Activated T-helper 1 cell treated with anti-CD3 and anti-CD28 coated beads, Interleukin-12 subunit alpha, Interleukin-12 subunit beta, Interleukin-2, Interleukin-4 antibody, amounts not matched to agents 30 ng/mL and 10 ng/mL and 1 ng/mL, durations not matched to agents 14 hours and 24 hours and 36 hours (primary cell): ENCODE measurements at regions of chr6 and their contacts with region 1.

Region 1: GRCh38 chr6:135114355-135115145 is 59.9 kb upstream of the HBS1L start:
- DNase-seq: peak; percentile 53
- H3K4me3 Mint-ChIP-seq: peak overlapping the region; percentile 66
- H3K27ac Mint-ChIP-seq: peak overlapping the region; percentile 97
- H3K4me1 Mint-ChIP-seq: peaks cover 88% of the 10 kb centered on the region
- H3K27me3 Mint-ChIP-seq: no peaks in the 10 kb centered on the region

Region 2: GRCh38 chr6:135014353-135014832 is 100.2 kb before region 1 on chr6:
- intact Hi-C with region 1: loop called (anchors 1 kb)
- DNase-seq: no peak
- H3K4me3 Mint-ChIP-seq: peak overlapping the region; percentile 54
- H3K27ac Mint-ChIP-seq: peak overlapping the region; percentile 92
- H3K4me1 Mint-ChIP-seq: peaks cover 57% of the 10 kb centered on the region
- H3K27me3 Mint-ChIP-seq: no peaks in the 10 kb centered on the region

Region 3: DNA sequence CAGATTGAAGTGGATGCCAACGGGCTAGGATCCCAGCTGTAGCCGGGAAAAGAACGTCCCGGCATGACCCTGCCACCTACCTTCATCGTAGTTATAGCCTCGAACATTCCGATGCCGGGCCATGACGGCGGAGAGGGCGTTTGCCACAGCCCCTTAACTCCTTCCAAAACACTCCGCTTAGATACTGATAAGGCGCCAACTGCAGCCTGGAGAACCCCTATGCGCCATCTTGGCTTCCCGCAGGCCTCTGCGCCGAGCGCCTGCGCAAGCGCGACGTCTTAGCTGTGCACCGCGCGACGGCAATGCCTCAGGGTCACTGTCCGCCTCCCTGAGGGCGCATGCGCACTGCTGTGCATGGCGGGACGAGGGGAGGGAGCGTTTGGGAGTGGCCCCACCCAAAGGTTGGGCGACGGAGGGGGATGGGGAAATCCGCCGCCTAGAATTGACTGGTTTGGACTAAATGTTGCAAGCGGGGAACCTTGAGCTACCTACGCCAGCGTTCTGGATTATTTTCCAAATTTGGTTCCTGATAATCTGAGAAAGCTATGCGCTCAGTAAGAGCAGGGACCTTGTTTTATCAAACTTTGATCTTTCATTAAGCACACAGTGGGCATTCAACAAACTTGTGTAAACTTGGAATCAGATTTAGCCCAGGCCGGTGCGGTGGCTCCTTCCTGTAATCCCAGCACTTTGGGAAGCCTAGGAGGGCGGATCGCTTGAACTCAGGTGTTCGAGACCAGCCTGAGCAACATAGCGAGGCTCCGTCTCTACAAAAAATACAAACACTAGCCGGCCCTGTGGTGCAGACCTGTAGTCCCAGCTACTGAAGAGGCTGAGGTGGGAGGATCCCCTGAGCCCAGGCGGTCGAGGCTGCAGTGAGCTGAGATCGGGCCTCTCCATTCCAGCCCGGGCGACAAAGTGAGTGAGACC is 59.7 kb before region 1 on chr6 and contains the start of gene HBS1L:
- intact Hi-C with region 1: loop called (anchors 1 kb)
- DNase-seq: peak; percentile 99
- H3K4me3 Mint-ChIP-seq: peak within 1 kb of the TSS; percentile 94
- H3K27ac Mint-ChIP-seq: peak within 1 kb of the TSS; percentile 96
- H3K4me1 Mint-ChIP-seq: peaks cover 42% of the 10 kb centered on the region
- H3K27me3 Mint-ChIP-seq: peaks cover 2% of the 10 kb centered on the region
- total RNA-seq, gene HBS1L: 104 and 115 TPM in 2 replicates

Region 4: DNA sequence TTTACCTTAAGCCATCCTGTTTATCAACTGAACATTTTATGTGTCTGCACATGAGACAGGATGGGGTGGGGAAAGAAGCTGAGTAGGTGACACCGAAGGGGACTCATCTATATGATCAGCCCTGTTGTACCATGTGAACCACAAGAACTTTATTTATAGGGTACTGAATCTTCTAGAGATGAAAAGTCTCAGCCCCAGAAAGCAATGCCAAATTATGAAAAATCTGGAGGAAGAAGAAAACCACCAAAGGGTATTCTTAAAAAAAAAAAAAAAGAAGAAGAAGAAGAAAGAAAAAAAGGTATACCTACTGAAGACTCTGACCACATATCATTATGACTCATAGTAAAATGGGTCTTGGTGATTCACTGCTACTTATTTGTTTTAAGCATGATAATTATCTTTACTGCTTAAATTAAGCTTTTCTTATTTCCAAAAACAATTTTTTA is 20.1 kb before region 1 on chr6:
- intact Hi-C with region 1: loop called (anchors 1 kb)
- DNase-seq: peak; percentile 20
- H3K4me3 Mint-ChIP-seq: peak overlapping the region; percentile 24
- H3K27ac Mint-ChIP-seq: peak overlapping the region; percentile 95
- H3K4me1 Mint-ChIP-seq: peaks cover 65% of the 10 kb centered on the region
- H3K27me3 Mint-ChIP-seq: peaks cover 2% of the 10 kb centered on the region

Region 5: GRCh38 chr6:135145063-135145800 is 30.7 kb after region 1 on chr6:
- intact Hi-C with region 1: loop called (anchors 1 kb)
- DNase-seq: no peak
- H3K4me3 Mint-ChIP-seq: peak overlapping the region; percentile 55
- H3K27ac Mint-ChIP-seq: peak overlapping the region; percentile 83
- H3K4me1 Mint-ChIP-seq: peaks cover 80% of the 10 kb centered on the region
- H3K27me3 Mint-ChIP-seq: no peaks in the 10 kb centered on the region

Region 6: DNA sequence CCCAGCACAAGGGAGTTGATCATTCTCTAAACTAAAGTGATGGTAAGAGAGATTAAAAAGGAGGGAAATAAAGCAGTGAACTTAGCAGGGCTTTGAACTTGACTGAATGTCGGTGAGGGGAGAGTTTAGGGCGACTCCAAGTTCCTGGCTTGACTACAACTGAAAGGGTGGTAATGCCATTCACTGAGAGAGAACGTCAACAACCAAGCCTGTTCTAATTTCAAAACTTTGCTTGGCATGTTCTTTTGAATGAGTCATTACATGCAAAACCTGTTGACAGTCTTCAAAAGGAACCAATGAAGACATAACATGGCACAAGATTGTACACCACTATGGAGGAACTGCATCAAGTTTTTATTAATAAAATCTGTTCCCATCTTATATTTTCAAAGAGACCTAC is 56.3 kb after region 1 on chr6:
- intact Hi-C with region 1: loop called (anchors 1 kb)
- DNase-seq: peak; percentile 16
- H3K4me3 Mint-ChIP-seq: peak overlapping the region; percentile 38
- H3K27ac Mint-ChIP-seq: peak overlapping the region; percentile 75
- H3K4me1 Mint-ChIP-seq: peaks cover 50% of the 10 kb centered on the region
- H3K27me3 Mint-ChIP-seq: no peaks in the 10 kb centered on the region

Region 7: DNA sequence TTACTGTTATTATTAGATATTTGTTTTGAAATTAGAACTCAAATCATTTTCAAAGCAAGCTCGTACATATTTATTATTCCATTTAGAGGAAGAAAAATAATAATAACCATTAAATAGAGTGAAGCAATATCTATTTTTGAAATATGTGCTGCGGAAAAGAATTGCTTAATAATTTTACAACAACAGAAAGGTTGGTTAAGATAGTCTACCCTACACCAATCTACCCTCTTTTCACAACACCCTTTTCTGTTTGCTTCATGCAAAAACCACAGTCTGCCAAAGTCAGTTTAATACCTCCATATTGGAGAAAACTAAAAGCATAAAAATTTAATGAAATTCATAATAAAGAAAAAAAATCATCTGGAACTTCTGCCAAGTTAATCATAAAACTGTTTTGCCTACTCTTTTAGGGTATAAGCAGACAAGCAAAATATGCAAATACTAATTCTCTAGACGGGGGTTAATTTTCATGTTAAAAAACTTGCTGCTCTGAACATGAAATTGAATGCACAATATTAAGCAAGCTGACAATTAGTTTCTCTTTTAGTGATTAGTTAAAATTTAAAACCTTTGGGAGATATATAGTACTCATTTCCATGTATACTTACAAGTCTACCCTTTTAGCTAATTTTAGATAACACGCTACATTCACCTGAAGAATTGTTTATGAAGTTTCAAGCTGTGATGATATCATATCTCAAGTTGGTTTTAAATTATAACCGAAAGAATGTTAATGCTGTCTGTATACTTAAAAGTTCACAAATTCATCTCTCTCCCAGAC is 282.8 kb after region 1 on chr6:
- intact Hi-C with region 1: no loop called
- DNase-seq: no peak
- H3K4me3 Mint-ChIP-seq: no peak overlapping the region
- H3K27ac Mint-ChIP-seq: no peak overlapping the region
- H3K4me1 Mint-ChIP-seq: no peaks in the 10 kb centered on the region
- H3K27me3 Mint-ChIP-seq: peaks cover 3% of the 10 kb centered on the region

Region 8: GRCh38 chr6:135627092-135627715 is 512.7 kb after region 1 on chr6:
- intact Hi-C with region 1: loop called (anchors 10 kb)
- DNase-seq: no peak
- H3K4me3 Mint-ChIP-seq: no peak overlapping the region
- H3K27ac Mint-ChIP-seq: peak overlapping the region; percentile 68
- H3K4me1 Mint-ChIP-seq: peaks cover 80% of the 10 kb centered on the region
- H3K27me3 Mint-ChIP-seq: no peaks in the 10 kb centered on the region